OCI-LY7 (cell line): ENCODE measurements at regions of chr2 and their contacts with region 1.

Region 1: GRCh38 chr2:18889565-18890332 is 300.4 kb upstream of the NT5C1B start:
- DNase-seq: no peak
- H3K4me3 ChIP-seq: no peak overlapping the region
- H3K27ac ChIP-seq: no peak overlapping the region
- H3K4me1 ChIP-seq: no peaks in the 10 kb centered on the region
- CTCF ChIP-seq: no peak

Region 2: DNA sequence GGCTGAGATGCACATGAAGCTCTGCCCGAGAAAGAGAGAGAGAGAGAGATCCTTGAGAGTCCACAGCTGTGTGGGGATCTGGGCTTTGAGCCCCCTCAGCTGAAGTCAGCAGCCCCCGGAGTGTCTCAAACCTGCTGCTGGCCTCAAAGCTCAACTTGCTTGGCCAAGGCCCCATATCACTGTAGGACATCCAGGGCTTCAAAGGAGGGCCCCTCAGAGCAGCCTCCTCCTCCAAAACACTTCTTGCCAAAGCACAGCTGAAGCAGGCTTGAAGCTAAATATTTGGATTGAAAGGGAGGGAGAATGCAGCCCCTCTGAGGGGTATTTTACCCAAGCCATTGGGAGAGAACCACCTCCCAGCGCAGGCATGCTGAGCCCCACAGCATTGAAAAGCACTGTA is 111.0 kb after region 1 on chr2:
- CTCF ChIA-PET with region 1: no interaction called
- POLR2A ChIA-PET with region 1: no interaction called
- intact Hi-C with region 1: loop called (anchors 5 kb)
- DNase-seq: no peak
- H3K4me3 ChIP-seq: no peak overlapping the region
- H3K27ac ChIP-seq: no peak overlapping the region
- H3K4me1 ChIP-seq: no peaks in the 10 kb centered on the region
- CTCF ChIP-seq: no peak

Region 3: GRCh38 chr2:19347619-19348562 is 458.1 kb after region 1 on chr2:
- CTCF ChIA-PET with region 1: no interaction called
- POLR2A ChIA-PET with region 1: no interaction called
- intact Hi-C with region 1: loop called (anchors 10 kb)
- DNase-seq: peak; percentile 93
- H3K4me3 ChIP-seq: peak overlapping the region; percentile 96
- H3K27ac ChIP-seq: peak overlapping the region; percentile 48
- H3K4me1 ChIP-seq: peaks cover 5% of the 10 kb centered on the region
- CTCF ChIP-seq: no peak